Activated naive CD4-positive, alpha-beta T cell treated with anti-CD3 and anti-CD28 coated beads, Interleukin-2, amount 10 ng/mL, durations not matched to agents 7 days and 5 days (primary cell): ENCODE measurements at regions of chr14 and their contacts with region 1.

Region 1: DNA sequence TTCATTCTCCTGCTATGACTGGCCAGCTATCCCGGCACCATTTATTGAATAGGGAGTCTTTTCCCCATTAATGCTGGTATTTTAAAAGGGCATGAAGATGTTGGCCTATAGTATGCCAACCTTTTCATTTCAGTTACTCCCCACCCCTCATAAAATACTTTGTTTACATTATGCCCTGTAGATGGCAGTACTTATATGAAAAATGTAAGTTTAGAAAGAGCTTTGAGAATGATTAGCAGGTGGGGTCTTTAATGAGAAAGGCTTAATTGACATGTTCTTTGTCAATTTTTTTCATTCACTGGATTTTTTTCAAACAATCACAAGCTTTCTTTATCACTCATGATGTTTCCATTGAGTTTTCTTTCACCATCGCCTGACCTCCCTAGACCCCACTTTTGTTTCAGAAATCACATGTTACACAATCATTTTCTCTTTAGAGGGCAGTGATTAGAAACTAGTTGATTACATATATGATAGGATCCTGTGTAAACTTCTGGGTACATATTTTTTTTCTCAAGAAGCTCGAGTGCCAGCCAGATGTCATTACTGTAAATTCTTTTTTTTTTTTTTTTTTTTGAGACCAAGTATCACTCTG is 62.6 kb upstream of the PSMA6 start:
- DNase-seq: no peak
- H3K4me3 Mint-ChIP-seq: no peak overlapping the region
- H3K27ac Mint-ChIP-seq: no peak overlapping the region
- H3K4me1 Mint-ChIP-seq: peaks cover 20% of the 10 kb centered on the region
- H3K27me3 Mint-ChIP-seq: no peaks in the 10 kb centered on the region

Region 2: GRCh38 chr14:35240231-35240630 is 10.6 kb after region 1 on chr14:
- CTCF ChIA-PET with region 1: no interaction called
- DNase-seq: no peak
- H3K4me3 Mint-ChIP-seq: no peak overlapping the region
- H3K27ac Mint-ChIP-seq: no peak overlapping the region
- H3K4me1 Mint-ChIP-seq: peaks cover 2% of the 10 kb centered on the region
- H3K27me3 Mint-ChIP-seq: no peaks in the 10 kb centered on the region

Region 3: GRCh38 chr14:35331605-35332516 is 102.3 kb after region 1 on chr14:
- CTCF ChIA-PET with region 1: interaction called, 12 read pairs
- DNase-seq: no peak
- H3K4me3 Mint-ChIP-seq: no peak overlapping the region
- H3K27ac Mint-ChIP-seq: peak overlapping the region; percentile 67
- H3K4me1 Mint-ChIP-seq: peaks cover 29% of the 10 kb centered on the region
- H3K27me3 Mint-ChIP-seq: no peaks in the 10 kb centered on the region